Right ventricle myocardium superior (tissue), 1 donor: ENCODE measurements at regions of chr7 and their contacts with region 1.

Region 1: GRCh38 chr7:44885394-44886317 is at the start of gene PURB:
- DNase-seq: peak; percentile 97
- ATAC-seq: peak; percentile 98
- total RNA-seq, gene PURB: 13.3 TPM

Region 2: GRCh38 chr7:44986218-44987053 is 100.8 kb after region 1 on chr7:
- intact Hi-C with region 1: loop called (anchors 10 kb)
- DNase-seq: peak; percentile 97
- ATAC-seq: peak; percentile 99